Activated CD4-positive, alpha-beta T cell treated with anti-CD3 and anti-CD28 coated beads for 36 hours (primary cell): ENCODE measurements at regions of chr10 and their contacts with region 1.

Region 1: DNA sequence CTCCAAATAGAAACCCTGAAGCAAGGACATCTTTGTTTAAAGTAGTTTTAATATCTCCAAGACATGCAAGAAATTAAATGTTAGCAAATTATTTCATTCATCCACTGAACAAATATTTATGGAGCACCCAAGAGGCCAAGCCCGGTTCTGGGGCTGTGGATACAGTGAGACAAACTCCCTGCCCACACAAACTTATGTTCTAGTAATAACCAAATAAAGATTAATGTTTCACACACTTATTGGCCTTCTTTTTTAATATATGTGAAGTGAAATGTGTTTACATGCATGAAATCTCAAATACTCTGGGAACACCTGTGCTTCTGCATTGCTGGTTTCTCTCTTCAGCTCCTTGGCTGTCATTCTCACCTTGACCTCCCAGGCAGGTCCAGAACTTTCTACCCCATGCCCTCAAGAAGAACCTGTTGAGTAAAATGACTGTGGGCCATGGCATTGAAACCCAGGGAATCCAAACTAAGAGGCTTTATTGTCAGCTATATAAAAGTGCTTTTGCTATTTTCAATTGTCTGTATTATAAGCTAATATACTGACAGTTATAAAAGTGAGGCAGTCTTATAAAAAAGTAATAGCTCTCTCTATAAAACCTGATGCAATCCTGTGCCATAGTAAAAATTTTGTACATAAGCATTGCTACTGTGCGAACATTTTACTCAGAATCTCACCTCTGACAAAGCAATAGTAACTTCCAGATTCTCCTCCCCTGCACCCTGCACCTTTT is 43.7 kb downstream of the SVIL start:
- DNase-seq: no peak
- ATAC-seq: no peak
- H3K4me3 Mint-ChIP-seq: peak overlapping the region; percentile 44
- H3K27ac Mint-ChIP-seq: peak overlapping the region; percentile 86
- H3K4me1 Mint-ChIP-seq: peaks cover 18% of the 10 kb centered on the region
- H3K27me3 Mint-ChIP-seq: no peaks in the 10 kb centered on the region

Region 2: DNA sequence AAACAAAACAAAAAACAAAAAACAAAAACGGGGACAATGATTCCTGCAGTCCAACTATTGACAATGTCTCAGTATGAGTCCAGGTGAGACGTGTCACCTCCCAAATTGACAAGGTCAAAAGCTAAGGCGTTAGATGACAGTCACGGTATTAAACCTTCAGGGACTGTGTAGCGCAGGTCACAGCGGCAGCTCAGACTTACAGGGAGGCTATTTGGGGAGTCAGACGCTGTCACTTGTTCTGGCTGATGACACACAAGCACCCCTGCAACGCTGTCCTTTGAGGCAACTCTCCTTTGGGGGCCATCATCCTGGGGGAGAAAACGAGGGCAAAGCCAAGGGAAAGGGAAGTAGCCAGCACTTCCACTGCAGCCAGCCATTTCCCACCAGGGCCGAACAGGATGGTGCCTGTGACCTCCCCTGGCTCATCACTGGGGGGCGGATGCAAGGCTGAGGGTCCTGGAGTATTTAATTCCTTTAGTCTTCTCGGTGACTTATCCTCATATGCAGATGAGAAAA is 11.6 kb before region 1 on chr10:
- CTCF ChIA-PET with region 1: interaction called, 21 read pairs
- POLR2A ChIA-PET with region 1: no interaction called
- intact Hi-C with region 1: no loop called
- DNase-seq: no peak
- ATAC-seq: no peak
- H3K4me3 Mint-ChIP-seq: no peak overlapping the region
- H3K27ac Mint-ChIP-seq: no peak overlapping the region
- H3K4me1 Mint-ChIP-seq: peaks cover 15% of the 10 kb centered on the region
- H3K27me3 Mint-ChIP-seq: no peaks in the 10 kb centered on the region

Region 3: GRCh38 chr10:29669149-29669548 is 78.1 kb after region 1 on chr10:
- CTCF ChIA-PET with region 1: no interaction called
- POLR2A ChIA-PET with region 1: no interaction called
- intact Hi-C with region 1: no loop called
- DNase-seq: no peak
- ATAC-seq: no peak
- H3K4me3 Mint-ChIP-seq: no peak overlapping the region
- H3K27ac Mint-ChIP-seq: no peak overlapping the region
- H3K4me1 Mint-ChIP-seq: peaks cover 14% of the 10 kb centered on the region
- H3K27me3 Mint-ChIP-seq: no peaks in the 10 kb centered on the region